Panc1 (cell line): ENCODE measurements at regions of chr17 and their contacts with region 1.

Region 1: GRCh38 chr17:78484300-78485246 is 92.6 kb downstream of the DNAH17 start:
- DNase-seq: no peak
- ATAC-seq: peak; percentile 93
- H3K4me3 ChIP-seq: peak overlapping the region; percentile 49 to 74
- H3K27ac ChIP-seq: peak overlapping the region; percentile 74
- H3K4me1 ChIP-seq: 0 out of 2 replicates have a peak, but pooled peaks cover 3% of the 10 kb centered on the region
- H3K27me3 ChIP-seq: no peaks in the 10 kb centered on the region
- CTCF ChIP-seq: no peak

Region 2: DNA sequence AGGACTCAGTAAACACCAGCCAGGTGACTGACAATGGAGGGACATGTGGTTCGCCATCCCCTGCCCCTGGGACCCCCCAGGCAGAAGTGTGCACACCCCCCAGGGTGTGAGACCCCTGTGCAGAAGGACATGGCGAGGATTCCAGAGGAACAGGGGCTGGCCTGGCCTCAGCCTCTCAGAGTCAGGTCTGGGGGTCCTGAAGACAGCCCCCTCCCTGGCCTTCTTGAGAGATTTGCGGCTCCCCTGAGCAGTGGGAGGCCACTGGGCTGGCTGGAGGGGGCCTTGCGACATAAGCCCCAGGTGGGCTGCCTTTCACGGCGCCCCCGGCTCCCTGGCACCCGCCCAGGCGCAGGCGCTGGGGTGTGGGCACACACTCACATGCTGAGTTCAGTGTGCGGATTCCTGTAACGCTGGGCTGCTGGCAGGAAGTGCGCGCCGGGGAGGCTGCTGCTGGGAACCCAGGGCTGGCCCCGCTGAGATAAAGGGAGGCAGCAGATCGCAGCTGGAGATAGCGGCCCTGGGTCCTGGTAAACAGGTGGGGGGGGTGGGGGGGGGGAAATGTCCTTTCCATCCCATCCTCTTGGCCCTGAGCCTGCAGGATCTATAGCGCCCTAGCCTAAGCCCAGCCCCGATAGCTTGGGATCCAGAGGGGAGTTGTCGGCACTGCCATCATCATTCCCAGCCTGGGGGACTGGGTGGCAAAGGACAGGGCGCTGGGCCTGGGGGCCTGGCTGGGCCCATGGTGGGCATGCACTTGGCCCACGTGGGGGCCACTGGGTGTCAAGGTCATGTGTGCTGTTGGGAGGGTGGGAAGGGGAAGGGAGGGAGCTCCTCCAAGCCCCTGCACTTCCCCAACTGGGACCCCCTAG is 226.0 kb before region 1 on chr17:
- CTCF ChIA-PET with region 1: no interaction called
- POLR2A ChIA-PET with region 1: interaction called, 13 read pairs
- in situ Hi-C with region 1: no loop called
- intact Hi-C with region 1: no loop called
- DNase-seq: no peak
- ATAC-seq: no peak; the same call in 1 of the 2 replicates
- H3K4me3 ChIP-seq: no peak overlapping the region
- H3K27ac ChIP-seq: peak overlapping the region; percentile 64
- H3K4me1 ChIP-seq: peaks cover 37% of the 10 kb centered on the region
- H3K27me3 ChIP-seq: no peaks in the 10 kb centered on the region
- CTCF ChIP-seq: no peak

Region 3: DNA sequence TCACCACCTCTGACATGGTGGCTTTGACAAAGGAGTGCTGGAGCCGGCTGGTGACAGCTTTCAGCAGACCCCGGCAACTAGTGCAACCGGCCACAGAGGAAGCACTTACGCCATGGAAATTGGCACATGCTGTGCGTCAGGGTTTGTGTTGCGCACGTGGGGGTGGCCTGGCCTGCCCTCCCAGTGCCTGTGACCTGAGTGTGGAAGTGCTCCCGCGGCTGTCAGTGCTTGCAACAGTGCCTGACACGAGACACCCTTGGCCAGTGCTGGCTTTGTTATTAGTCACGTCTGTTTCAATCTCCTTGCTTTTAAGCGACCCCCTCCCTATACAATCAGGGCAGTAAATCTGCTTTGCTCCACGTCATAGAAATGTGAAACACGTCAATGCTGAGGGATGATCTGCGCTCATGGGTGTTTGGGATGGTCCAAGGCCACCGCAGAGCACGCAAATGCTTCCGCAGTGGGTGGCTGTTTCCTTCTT is 41.9 kb before region 1 on chr17:
- CTCF ChIA-PET with region 1: interaction called, 4 read pairs
- POLR2A ChIA-PET with region 1: interaction called, 11 read pairs
- in situ Hi-C with region 1: no loop called
- intact Hi-C with region 1: no loop called
- DNase-seq: no peak
- ATAC-seq: no peak
- H3K4me3 ChIP-seq: no peak overlapping the region
- H3K27ac ChIP-seq: no peak overlapping the region
- H3K4me1 ChIP-seq: no peaks in the 10 kb centered on the region
- H3K27me3 ChIP-seq: no peaks in the 10 kb centered on the region
- CTCF ChIP-seq: no peak

Region 4: GRCh38 chr17:78458736-78459331 is 25.7 kb before region 1 on chr17:
- CTCF ChIA-PET with region 1: interaction called, 18 read pairs
- POLR2A ChIA-PET with region 1: no interaction called
- in situ Hi-C with region 1: no loop called
- intact Hi-C with region 1: no loop called
- DNase-seq: no peak
- ATAC-seq: peak; percentile 24; the same call in 1 of the 2 replicates
- H3K4me3 ChIP-seq: no peak overlapping the region
- H3K27ac ChIP-seq: no peak overlapping the region
- H3K4me1 ChIP-seq: no peaks in the 10 kb centered on the region
- H3K27me3 ChIP-seq: no peaks in the 10 kb centered on the region; the same call in 1 of the 2 replicates
- CTCF ChIP-seq: no peak

Region 5: DNA sequence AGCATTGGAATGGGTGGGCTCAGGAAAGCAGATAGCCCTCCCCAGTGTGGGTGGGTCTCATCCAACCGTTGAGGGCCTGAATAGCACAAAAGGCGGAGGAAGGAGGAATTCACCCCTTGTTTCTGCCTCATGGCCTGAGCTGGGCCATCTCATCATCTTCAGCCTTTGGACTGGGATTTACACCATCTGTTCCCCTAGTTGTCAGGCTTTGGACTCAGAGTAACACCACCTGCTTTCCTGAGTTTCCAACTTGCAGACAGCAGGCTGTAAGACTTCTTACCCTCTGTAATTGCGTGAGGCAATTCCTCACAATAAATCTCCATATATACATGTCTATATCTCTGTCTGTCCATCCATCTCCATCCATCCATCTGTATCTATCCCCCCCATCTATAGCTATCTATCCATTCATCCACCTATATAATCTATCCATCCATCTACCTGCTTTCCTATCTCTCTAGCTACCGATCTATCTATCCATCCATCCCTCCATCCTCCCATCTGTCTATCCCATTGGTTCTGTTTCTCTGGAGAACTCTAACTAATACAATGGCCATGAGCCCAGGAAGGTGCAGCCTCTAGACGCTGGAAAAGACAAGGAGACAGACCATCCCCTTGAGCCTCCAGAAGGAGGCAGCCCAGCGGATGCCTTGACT is 71.3 kb after region 1 on chr17:
- CTCF ChIA-PET with region 1: no interaction called
- POLR2A ChIA-PET with region 1: no interaction called
- in situ Hi-C with region 1: no loop called
- intact Hi-C with region 1: no loop called
- DNase-seq: no peak
- ATAC-seq: no peak
- H3K4me3 ChIP-seq: no peak overlapping the region
- H3K27ac ChIP-seq: no peak overlapping the region
- H3K4me1 ChIP-seq: no peaks in the 10 kb centered on the region
- H3K27me3 ChIP-seq: no peaks in the 10 kb centered on the region
- CTCF ChIP-seq: no peak

Region 6: GRCh38 chr17:78708510-78708973 is 224.0 kb after region 1 on chr17:
- CTCF ChIA-PET with region 1: no interaction called
- POLR2A ChIA-PET with region 1: no interaction called
- in situ Hi-C with region 1: loop called (anchors 10 kb)
- intact Hi-C with region 1: no loop called
- DNase-seq: peak; percentile 41
- ATAC-seq: peak; percentile 98
- H3K4me3 ChIP-seq: no peak overlapping the region
- H3K27ac ChIP-seq: no peak overlapping the region; the same call in 1 of the 2 replicates
- H3K4me1 ChIP-seq: peaks cover 15% of the 10 kb centered on the region; the same call in 1 of the 2 replicates
- H3K27me3 ChIP-seq: no peaks in the 10 kb centered on the region
- CTCF ChIP-seq: peak; percentile 96